ENCODE measurements at regions of chr12 and their contacts with region 1.

Region 1: DNA sequence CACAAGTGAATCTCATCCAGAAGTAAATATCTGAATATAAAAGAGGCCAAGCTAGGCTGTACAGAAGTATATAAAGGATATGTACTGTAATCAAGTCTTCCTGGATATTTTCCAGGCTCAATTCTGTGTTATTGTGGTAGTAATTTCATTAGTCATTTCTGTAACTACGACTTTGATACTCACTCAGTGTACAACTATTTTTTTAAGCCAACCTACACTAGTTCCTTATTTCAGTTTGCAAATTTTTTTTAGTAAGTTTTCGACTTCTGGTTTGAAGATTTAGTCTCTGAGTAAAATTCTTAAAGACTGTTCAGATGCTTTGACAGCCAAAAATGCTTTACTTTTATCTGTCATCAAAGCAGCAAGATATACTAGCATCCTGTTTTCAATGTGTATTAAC is 130.8 kb downstream of the CAPZA3 start:
- DNase-seq: no peak
- H3K4me3 Mint-ChIP-seq: no peak overlapping the region
- H3K27ac Mint-ChIP-seq: no peak overlapping the region
- H3K4me1 Mint-ChIP-seq: peaks cover 23% of the 10 kb centered on the region
- H3K27me3 Mint-ChIP-seq: peaks cover 1% of the 10 kb centered on the region

Region 2: GRCh38 chr12:18165422-18165871 is 703.3 kb before region 1 on chr12:
- CTCF ChIA-PET with region 1: no interaction called
- POLR2A ChIA-PET with region 1: no interaction called
- intact Hi-C with region 1: loop called (anchors 1 kb)
- DNase-seq: no peak
- H3K4me3 Mint-ChIP-seq: no peak overlapping the region
- H3K27ac Mint-ChIP-seq: peak overlapping the region; percentile 36
- H3K4me1 Mint-ChIP-seq: peaks cover 18% of the 10 kb centered on the region
- H3K27me3 Mint-ChIP-seq: peaks cover 1% of the 10 kb centered on the region

Region 3: GRCh38 chr12:18676996-18677588 is 191.6 kb before region 1 on chr12:
- CTCF ChIA-PET with region 1: no interaction called
- POLR2A ChIA-PET with region 1: no interaction called
- intact Hi-C with region 1: no loop called
- DNase-seq: no peak
- H3K4me3 Mint-ChIP-seq: no peak overlapping the region
- H3K27ac Mint-ChIP-seq: no peak overlapping the region
- H3K4me1 Mint-ChIP-seq: no peaks in the 10 kb centered on the region
- H3K27me3 Mint-ChIP-seq: no peaks in the 10 kb centered on the region

Region 4: DNA sequence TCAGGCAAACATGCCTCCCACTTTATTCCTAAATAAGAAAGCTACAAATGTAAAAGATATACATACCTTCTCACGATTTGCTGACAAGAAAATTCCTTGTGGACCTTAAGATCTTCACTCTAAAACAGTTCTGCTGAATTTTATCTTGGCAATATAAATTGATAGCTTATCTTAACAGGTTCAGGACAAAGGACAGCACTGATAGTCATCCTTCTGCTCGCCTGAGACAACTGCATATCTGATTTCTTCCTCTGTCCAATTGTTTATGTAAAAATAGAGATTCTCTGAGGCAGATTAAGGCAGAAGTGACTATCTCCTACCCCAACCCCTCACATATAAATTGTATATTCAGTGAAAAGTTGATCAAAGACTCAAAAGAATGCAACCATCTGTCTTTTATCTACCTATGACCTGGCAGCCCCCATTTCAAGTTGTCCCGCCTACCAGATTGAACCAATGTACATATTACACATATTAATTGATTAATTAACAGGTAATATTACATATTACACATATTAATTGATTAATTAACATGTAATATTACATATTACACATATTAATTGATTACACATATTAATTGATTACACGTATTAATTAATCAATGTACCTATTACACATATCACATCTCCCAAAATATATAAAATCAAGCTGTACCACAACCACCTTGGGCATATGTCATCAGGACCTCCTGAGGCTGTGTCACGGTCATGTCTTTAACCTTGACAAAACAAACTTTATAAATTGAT is 85.7 kb before region 1 on chr12:
- CTCF ChIA-PET with region 1: no interaction called
- POLR2A ChIA-PET with region 1: no interaction called
- intact Hi-C with region 1: no loop called
- DNase-seq: no peak
- H3K4me3 Mint-ChIP-seq: no peak overlapping the region
- H3K27ac Mint-ChIP-seq: no peak overlapping the region
- H3K4me1 Mint-ChIP-seq: no peaks in the 10 kb centered on the region
- H3K27me3 Mint-ChIP-seq: no peaks in the 10 kb centered on the region

Measured in activated CD4-positive, alpha-beta memory T cell treated with anti-CD3 and anti-CD28 coated beads for 36 hours (primary cell).